Activated naive CD4-positive, alpha-beta T cell treated with anti-CD3 and anti-CD28 coated beads for 36 hours (primary cell): ENCODE measurements at regions of chr22 and their contacts with region 1.

Region 1: DNA sequence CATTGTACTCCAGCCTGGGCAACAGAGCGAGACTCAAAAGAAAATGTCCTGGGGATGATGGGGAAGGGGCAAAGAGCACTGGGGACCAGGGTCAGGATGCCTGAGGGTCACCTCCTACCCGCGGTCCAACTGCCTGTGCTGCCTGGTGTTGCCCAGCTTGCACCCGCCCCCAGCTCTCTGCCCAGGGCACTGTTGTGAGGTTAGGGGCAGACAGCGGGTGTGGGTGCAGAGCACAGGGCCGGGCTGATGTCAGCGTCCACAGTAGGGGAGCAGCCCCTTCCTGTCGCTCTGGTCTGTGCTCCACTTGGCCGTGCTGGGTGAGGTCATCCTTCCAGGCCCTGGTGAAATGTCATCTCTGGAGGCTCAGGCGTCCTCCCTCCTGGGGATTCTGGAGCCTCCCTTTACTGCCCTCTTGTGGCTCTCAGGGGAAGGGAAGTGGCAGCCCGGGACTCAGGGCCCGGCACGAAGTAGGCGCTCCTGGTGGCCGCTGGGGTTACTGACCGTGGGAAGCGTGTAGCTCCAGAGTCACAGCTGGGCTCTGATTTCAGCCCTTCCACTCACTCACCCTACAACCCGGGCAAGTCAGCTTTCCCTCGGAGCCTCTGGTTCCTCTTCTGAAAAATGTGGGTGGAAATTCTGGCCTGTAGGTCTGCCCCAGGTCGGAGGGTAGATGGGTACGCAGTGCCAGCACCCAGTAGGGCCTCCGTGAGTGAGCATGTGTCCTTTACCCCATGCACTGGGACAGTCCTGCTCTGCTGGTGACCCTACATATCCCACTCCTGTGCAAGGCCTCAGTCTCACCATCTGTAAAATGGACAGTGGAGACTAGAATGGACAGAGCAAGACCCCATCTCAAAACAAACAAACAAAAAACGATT is 17.3 kb upstream of the PRR5 start:
- DNase-seq: peak; percentile 93
- H3K4me3 Mint-ChIP-seq: no peak overlapping the region
- H3K27ac Mint-ChIP-seq: peak overlapping the region; percentile 87
- H3K4me1 Mint-ChIP-seq: peaks cover 41% of the 10 kb centered on the region
- H3K27me3 Mint-ChIP-seq: no peaks in the 10 kb centered on the region

Region 2: DNA sequence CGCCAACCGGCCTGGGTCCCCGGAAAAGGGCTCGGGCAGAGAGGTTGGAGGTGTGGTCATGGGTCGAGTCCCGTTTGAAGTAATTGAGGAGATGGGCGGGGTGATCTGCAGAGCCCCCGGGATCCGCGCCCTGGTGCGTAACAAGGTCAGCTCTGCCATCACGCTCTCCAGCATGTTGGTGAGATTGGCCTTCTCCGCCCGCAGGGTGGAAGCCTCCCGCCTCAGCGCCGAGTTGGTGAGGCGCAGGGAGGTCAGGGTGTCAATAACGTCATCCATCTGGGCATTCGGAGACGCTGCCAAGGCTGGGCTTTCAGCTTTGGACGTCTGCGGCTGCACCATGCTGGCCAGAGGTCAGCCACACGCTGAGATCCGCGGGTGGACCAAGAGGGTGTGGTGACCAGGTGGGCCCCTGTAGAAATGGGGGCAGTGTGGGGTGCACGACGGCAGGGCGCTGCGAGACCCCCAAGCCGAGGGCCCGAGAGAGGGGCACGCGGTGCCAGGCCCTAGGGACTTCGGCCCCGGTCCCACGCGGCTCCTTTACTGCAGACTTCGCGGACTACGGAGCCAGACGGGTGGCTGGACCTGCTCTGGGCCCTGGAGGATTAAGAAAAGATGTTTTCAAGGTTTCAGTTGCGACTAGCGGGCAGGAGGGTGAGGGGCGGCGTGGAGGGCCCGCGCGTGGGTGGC is 187.4 kb before region 1 on chr22:
- CTCF ChIA-PET with region 1: no interaction called
- intact Hi-C with region 1: loop called (anchors 10 kb)
- DNase-seq: no peak
- H3K4me3 Mint-ChIP-seq: peak overlapping the region; percentile 69
- H3K27ac Mint-ChIP-seq: no peak overlapping the region
- H3K4me1 Mint-ChIP-seq: peaks cover 24% of the 10 kb centered on the region
- H3K27me3 Mint-ChIP-seq: no peaks in the 10 kb centered on the region

Region 3: GRCh38 chr22:44567846-44568493 is 116.8 kb before region 1 on chr22:
- CTCF ChIA-PET with region 1: no interaction called
- intact Hi-C with region 1: no loop called
- DNase-seq: peak; percentile 71
- H3K4me3 Mint-ChIP-seq: no peak overlapping the region
- H3K27ac Mint-ChIP-seq: no peak overlapping the region
- H3K4me1 Mint-ChIP-seq: no peaks in the 10 kb centered on the region
- H3K27me3 Mint-ChIP-seq: peaks cover 5% of the 10 kb centered on the region

Region 4: DNA sequence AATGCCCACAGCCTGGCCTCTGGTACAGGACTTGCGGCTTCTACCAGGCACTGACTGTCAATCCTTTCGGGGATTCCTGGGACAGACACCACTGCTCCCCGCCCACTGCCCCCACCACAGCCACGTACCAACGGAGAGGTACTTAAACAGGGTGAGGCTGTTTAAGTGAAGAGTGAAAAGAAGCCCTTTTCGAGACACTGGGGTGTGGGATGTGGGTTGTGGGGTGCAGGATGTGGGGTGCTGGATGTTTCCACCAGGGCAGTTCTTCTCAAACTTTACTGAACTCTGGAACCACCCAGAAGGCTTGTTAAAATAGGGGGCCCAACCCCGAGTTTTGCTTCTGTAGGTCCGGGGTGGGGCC is 16.9 kb before region 1 on chr22:
- CTCF ChIA-PET with region 1: interaction called, 18 read pairs
- intact Hi-C with region 1: loop called (anchors 1 kb)
- DNase-seq: peak; percentile 62
- H3K4me3 Mint-ChIP-seq: peak overlapping the region; percentile 63
- H3K27ac Mint-ChIP-seq: no peak overlapping the region
- H3K4me1 Mint-ChIP-seq: peaks cover 34% of the 10 kb centered on the region
- H3K27me3 Mint-ChIP-seq: no peaks in the 10 kb centered on the region

Region 5: DNA sequence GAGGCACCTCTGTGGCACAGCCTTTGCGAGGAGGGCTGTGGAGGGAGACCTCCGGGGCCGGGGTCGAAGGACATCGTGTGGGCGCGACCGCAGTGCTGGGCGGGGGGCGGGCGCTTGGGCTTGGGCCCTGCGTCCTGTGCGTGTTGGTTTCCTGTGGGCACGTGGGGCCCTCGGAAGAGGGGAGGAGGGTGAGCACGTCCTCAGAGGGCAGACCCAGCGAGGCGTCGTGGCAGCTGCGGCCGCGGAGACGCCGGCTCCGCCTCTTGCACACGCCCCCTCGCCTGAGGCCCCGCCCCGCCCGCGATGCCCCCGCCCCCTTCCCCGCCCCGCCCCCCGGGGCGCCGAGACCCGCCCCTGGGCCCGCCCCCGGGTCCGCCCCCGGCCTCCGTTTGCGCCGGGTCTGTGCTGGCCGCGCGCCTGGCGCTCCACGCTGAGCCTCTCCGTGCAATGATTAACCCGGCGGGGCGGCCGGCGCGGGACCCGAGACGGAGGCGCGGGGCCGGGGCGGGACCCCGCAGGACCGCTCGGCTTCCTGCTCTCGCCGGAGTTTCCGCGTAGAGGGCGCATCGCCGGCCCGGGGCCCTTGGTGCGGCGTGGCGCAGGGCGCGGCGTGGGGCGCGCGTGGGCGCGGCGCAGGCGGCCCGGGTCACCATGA is 17.2 kb after region 1 on chr22 and contains the start of gene PRR5:
- CTCF ChIA-PET with region 1: interaction called, 7 read pairs
- intact Hi-C with region 1: loop called (anchors 1 kb)
- DNase-seq: peak; percentile 87
- H3K4me3 Mint-ChIP-seq: peak within 1 kb of the TSS; percentile 73
- H3K27ac Mint-ChIP-seq: peak within 1 kb of the TSS; percentile 36
- H3K4me1 Mint-ChIP-seq: peaks cover 20% of the 10 kb centered on the region
- H3K27me3 Mint-ChIP-seq: no peaks in the 10 kb centered on the region
- total RNA-seq, gene PRR5: 7.9 to 10.2 TPM

Region 6: DNA sequence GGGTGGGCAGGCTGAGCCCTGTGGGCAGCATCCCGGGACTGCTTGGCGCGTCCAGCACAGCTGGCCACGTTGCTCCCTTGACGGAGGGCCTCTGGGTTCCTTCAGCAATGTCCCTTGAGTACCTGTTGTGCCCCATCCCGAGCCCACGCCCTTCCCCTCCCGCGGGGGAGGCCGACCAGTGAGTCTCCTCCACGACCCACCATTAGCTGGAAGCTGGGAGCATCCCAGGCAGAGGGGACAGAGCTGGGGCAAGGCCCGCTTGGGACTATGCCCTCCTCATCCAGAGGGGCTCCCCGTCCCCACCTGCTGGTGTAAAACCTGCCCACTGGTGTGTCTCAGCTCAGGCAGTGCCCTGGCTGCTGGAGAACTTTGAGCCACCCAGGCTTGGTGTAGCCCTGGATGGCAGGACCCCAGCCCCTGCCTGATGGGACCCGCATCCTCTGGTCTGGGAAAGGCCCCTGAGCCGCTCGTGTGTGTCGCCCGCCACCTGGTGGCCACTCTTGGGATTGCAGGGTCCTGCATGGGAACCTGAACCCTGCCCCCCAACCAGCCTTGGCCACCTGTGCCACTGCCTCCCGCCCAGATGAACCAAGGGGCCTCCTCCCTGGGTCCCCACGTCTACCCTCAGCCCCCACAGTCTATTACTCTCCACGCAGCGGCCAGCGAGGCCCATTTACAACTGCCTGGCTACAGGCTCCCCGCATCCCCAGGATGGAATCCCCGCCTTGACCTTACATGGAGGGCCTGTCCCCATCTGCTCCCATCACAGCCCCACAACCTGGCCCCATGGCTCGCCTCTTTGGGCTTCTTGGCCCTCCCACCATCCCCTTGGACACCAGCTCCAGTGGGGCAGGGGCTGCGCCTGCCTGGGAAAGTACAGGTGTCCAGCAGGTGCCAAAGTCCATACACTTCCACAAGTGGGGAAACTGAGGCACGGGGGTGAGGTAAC is 51.1 kb after region 1 on chr22:
- CTCF ChIA-PET with region 1: interaction called, 11 read pairs
- intact Hi-C with region 1: no loop called
- DNase-seq: peak; percentile 85
- H3K4me3 Mint-ChIP-seq: no peak overlapping the region
- H3K27ac Mint-ChIP-seq: no peak overlapping the region
- H3K4me1 Mint-ChIP-seq: peaks cover 2% of the 10 kb centered on the region
- H3K27me3 Mint-ChIP-seq: no peaks in the 10 kb centered on the region

Region 7: DNA sequence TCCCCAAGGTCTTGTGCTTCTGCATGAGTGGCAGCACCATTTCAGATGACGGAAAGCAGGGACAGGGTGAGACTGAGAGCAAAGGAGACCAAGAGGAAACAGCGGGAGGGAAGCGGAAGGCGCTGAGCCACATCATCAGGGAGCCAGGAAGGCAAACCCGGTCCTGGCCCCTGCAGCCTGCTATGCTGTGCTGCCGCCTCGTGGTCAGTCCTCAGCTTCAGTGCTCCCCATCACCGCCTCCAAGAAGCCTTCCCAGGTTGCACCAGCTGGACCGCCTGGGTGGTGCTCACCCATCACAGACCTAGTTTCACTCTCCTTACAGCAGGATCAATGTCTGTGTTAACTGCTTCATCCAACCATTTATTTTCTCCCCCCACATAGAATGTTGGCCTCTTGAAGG is 398.1 kb after region 1 on chr22:
- CTCF ChIA-PET with region 1: no interaction called
- intact Hi-C with region 1: loop called (anchors 10 kb)
- DNase-seq: peak; percentile 62
- H3K4me3 Mint-ChIP-seq: no peak overlapping the region
- H3K27ac Mint-ChIP-seq: no peak overlapping the region
- H3K4me1 Mint-ChIP-seq: peaks cover 22% of the 10 kb centered on the region
- H3K27me3 Mint-ChIP-seq: peaks cover 24% of the 10 kb centered on the region